Mammary epithelial cell (primary cell): ENCODE measurements at regions of chr6 and their contacts with region 1.

Region 1: GRCh38 chr6:28252009-28252975 is at the start of gene ZKSCAN4:
- DNase-seq: peak; percentile 82
- H3K4me3 ChIP-seq: peak within 1 kb of the TSS; percentile 87 to 93 (median 89)
- H3K27ac ChIP-seq: peak within 1 kb of the TSS; percentile 8
- H3K4me1 ChIP-seq: peaks cover 8% of the 10 kb centered on the region
- H3K27me3 ChIP-seq: no peaks in the 10 kb centered on the region
- CTCF ChIP-seq: no peak
- total RNA-seq, gene ZKSCAN4: 3.6 to 5.8 TPM

Region 2: GRCh38 chr6:27940766-27941165 is 311.5 kb before region 1 on chr6:
- CTCF ChIA-PET with region 1: no interaction called
- dilution Hi-C with region 1: no loop called
- in situ Hi-C with region 1: no loop called
- intact Hi-C with region 1: no loop called
- DNase-seq: peak; percentile 1
- H3K4me3 ChIP-seq: no peak overlapping the region
- H3K27ac ChIP-seq: no peak overlapping the region
- H3K4me1 ChIP-seq: no peaks in the 10 kb centered on the region
- H3K27me3 ChIP-seq: no peaks in the 10 kb centered on the region
- CTCF ChIP-seq: no peak

Region 3: GRCh38 chr6:28078050-28078449 is 174.2 kb before region 1 on chr6:
- CTCF ChIA-PET with region 1: no interaction called
- dilution Hi-C with region 1: no loop called
- in situ Hi-C with region 1: no loop called
- intact Hi-C with region 1: no loop called
- DNase-seq: no peak
- H3K4me3 ChIP-seq: no peak overlapping the region
- H3K27ac ChIP-seq: no peak overlapping the region
- H3K4me1 ChIP-seq: peaks cover 4% of the 10 kb centered on the region
- H3K27me3 ChIP-seq: no peaks in the 10 kb centered on the region
- CTCF ChIP-seq: no peak

Region 4: GRCh38 chr6:28225056-28225834 is 27.0 kb before region 1 on chr6 and contains the start of gene ZSCAN9:
- CTCF ChIA-PET with region 1: no interaction called
- dilution Hi-C with region 1: no loop called
- in situ Hi-C with region 1: no loop called
- intact Hi-C with region 1: loop called (anchors 1 kb)
- DNase-seq: peak; percentile 91
- H3K4me3 ChIP-seq: peak within 1 kb of the TSS; percentile 57 to 76 (median 66)
- H3K27ac ChIP-seq: peak within 1 kb of the TSS; percentile 62
- H3K4me1 ChIP-seq: peaks cover 9% of the 10 kb centered on the region
- H3K27me3 ChIP-seq: no peaks in the 10 kb centered on the region
- CTCF ChIP-seq: no peak
- total RNA-seq, gene ZSCAN9: 11.9 to 15.5 TPM

Region 5: DNA sequence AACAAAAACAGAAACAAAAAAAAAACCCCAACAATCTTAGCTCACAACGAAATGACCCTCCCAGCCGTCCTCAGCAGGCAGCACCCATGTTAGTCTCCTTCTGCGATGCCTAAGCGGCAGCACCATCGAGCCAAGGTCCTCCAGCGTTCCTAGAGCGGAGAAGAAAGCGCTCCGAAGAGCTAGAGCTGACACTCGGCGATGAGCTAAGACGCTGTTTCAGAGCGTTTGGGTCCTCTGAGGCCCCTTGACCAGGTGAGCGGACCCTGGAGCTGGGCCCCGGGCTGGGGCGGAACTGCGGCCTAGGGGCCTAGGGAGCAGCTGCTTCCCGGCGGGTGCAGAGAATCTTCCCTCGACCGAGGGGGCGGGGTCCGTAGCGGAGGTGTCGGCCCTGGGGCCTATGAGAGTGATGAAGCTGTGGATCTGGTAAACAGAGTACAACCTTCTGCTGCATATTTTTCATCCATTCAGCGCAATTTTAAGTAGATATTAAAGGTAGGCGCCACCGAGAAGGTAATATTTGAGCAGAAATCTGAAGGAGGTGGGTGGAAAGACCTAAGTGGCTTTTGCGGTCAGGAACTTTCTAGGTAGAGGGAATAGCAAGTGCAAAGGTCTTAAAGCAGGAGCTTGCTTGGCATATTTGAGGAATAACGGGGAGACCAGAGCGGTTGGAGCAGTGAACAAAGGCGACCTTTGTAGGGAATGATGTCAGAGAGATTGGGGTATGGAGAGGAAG is 14.8 kb after region 1 on chr6 and contains the start of gene ZSCAN26:
- CTCF ChIA-PET with region 1: interaction called, 3 read pairs
- dilution Hi-C with region 1: no loop called
- in situ Hi-C with region 1: no loop called
- intact Hi-C with region 1: loop called (anchors 1 kb)
- DNase-seq: peak; percentile 91
- H3K4me3 ChIP-seq: peak within 1 kb of the TSS; percentile 85 to 94 (median 91)
- H3K27ac ChIP-seq: peak within 1 kb of the TSS; percentile 70
- H3K4me1 ChIP-seq: peaks cover 22% of the 10 kb centered on the region
- H3K27me3 ChIP-seq: no peaks in the 10 kb centered on the region
- CTCF ChIP-seq: no peak
- total RNA-seq, gene ZSCAN26: 12.4 to 12.7 TPM

Region 6: DNA sequence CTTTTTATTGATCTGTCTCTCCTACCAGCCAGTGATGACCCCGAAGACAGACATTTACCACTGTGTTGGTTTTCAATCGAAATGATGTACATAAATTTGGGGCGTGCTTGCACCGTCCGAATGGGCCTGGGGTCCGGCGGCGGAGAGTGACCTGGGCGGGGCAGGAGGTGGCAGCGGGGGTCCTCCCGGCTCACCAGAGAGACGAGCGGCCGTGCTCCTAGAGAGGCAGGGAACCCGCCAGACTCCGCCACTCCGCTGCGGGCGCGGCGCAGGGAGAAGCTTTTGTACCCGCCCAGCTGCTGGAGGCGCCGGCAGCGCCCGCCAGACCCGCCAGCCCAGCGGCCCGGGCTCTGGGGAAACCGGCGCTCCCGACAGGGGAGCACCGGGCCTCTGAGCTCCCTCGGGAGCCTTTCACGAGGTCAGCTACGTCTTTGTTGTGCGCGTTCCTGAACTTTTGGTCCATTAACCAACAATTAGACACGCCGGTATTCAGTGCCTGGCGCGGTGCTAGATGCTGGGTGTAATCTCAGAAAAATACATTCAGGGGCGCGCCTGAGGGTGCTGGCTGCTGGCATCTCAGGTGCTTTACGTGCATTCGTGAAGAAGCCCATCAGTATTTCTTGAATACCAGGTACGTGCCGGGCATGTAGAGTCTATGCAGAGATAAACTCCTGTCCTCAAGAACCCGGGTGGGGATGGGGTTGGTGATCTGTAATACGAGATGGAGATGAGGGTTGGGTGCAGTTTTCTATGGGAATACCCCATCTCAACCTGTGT is 29.2 kb after region 1 on chr6 and contains the start of gene PGBD1:
- CTCF ChIA-PET with region 1: no interaction called
- dilution Hi-C with region 1: no loop called
- in situ Hi-C with region 1: no loop called
- intact Hi-C with region 1: loop called (anchors 1 kb)
- DNase-seq: peak; percentile 61
- H3K4me3 ChIP-seq: peak within 1 kb of the TSS; percentile 70 to 93 (median 70)
- H3K27ac ChIP-seq: peak within 1 kb of the TSS; percentile 22
- H3K4me1 ChIP-seq: peaks cover 6% of the 10 kb centered on the region
- H3K27me3 ChIP-seq: no peaks in the 10 kb centered on the region
- CTCF ChIP-seq: no peak
- total RNA-seq, gene PGBD1: 5.7 to 7.7 TPM

Region 7: GRCh38 chr6:28296520-28297060 is 44.3 kb after region 1 on chr6:
- CTCF ChIA-PET with region 1: no interaction called
- dilution Hi-C with region 1: no loop called
- in situ Hi-C with region 1: no loop called
- intact Hi-C with region 1: no loop called
- DNase-seq: peak; percentile 19
- H3K4me3 ChIP-seq: no peak overlapping the region
- H3K27ac ChIP-seq: no peak overlapping the region
- H3K4me1 ChIP-seq: no peaks in the 10 kb centered on the region
- H3K27me3 ChIP-seq: no peaks in the 10 kb centered on the region
- CTCF ChIP-seq: no peak

Region 8: DNA sequence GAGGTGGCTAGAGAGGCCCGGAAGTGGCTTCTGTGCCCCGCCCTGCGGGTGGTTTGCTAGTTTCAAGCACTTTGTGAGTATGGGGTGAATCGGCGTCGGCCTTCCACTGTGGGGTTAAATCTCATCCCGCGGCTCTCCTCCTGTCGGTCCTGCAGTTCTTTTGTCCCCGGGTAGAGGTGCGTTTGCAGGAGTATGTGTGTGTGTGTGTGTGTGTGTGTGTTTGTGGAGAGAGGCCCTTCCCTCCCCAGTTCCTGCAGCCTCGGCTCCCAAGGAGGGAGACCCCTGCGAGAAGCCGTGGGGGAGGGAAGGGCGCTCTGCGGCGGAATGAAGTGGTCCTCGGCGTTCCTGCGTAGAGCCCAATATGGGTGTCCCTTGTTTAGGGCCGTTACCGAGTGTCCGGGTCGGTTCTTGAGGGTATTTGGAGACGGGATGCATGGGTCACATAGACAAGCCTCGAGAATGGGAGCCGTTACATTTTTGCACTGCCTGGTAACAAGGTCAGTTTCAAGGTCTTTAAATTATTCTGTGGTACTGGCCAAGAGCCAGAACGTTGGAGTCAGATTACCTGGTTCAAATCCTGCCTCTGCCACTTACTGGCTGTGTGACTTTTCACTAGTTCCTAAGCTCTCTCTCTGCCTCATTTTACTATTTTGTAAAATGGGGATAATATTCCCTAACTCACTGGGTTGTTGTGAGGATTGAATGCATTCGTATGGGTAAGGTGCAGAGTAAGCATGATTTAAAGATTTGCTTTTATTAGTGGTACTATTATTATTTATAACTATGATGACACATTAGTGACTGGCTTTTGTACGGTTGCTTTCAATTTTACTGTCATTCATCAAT is 97.8 kb after region 1 on chr6 and contains the start of gene ZKSCAN3:
- CTCF ChIA-PET with region 1: no interaction called
- dilution Hi-C with region 1: no loop called
- in situ Hi-C with region 1: no loop called
- intact Hi-C with region 1: loop called (anchors 1 kb)
- DNase-seq: peak; percentile 76
- H3K4me3 ChIP-seq: peak within 1 kb of the TSS; percentile 62 to 90 (median 74)
- H3K27ac ChIP-seq: peak within 1 kb of the TSS; percentile 42
- H3K4me1 ChIP-seq: peaks cover 13% of the 10 kb centered on the region
- H3K27me3 ChIP-seq: peaks cover 1% of the 10 kb centered on the region
- CTCF ChIP-seq: no peak
- total RNA-seq, gene ZKSCAN3: 4.0 to 4.1 TPM

Region 9: GRCh38 chr6:29426655-29427054 is 1174.4 kb after region 1 on chr6:
- CTCF ChIA-PET with region 1: no interaction called
- dilution Hi-C with region 1: no loop called
- in situ Hi-C with region 1: no loop called
- intact Hi-C with region 1: no loop called
- DNase-seq: no peak
- H3K4me3 ChIP-seq: no peak overlapping the region
- H3K27ac ChIP-seq: no peak overlapping the region
- H3K4me1 ChIP-seq: no peaks in the 10 kb centered on the region
- H3K27me3 ChIP-seq: peaks cover 3% of the 10 kb centered on the region
- CTCF ChIP-seq: no peak